GM12878 (cell line): ENCODE measurements at regions of chr1 and their contacts with region 1.

Region 1: DNA sequence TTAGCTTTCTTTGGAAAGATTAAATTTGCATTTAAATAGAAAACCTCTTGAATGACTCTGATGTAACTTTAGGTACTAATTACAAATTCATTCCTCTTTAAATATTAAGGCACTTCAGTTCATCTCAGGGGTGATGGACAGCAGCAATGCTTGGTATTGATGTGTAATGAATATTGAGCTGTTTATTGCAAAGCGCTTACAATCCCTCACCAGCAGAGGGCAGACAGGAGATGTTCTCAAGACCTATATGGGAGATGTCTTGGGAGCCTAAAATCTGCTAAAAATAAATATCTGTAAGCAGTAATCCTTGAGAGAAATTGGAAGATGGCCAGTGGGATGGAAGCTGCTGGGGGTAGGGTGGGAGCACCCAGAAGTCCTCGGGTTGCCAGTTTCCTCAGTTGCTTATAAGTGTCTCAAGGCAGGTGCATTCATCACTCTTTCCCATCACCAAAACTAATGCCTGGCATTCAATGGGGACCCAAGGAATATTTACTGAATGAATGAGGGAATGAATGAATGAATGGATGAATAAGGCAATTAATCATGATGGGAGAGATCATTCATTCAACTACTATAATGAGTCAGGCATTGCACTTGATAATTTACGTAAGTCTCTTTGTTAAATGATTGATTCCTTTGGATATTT is 2.3 kb downstream of the KLHDC8A start:
- DNase-seq: peak; percentile 9
- ATAC-seq: peak; percentile 91
- H3K4me3 ChIP-seq: no peak overlapping the region
- H3K27ac ChIP-seq: no peak overlapping the region
- H3K4me1 ChIP-seq: no peaks in the 10 kb centered on the region
- H3K27me3 ChIP-seq: peaks cover 0 to 4% of the 10 kb centered on the region in 2 experiments; a peak in 3 of 4 replicates
- CTCF ChIP-seq: peak; percentile 74 to 83 (median 83)
- EP300 ChIP-seq: no peak
- POLR2A ChIP-seq: no peak
- RAD21 ChIP-seq: peak; percentile 69

Region 2: DNA sequence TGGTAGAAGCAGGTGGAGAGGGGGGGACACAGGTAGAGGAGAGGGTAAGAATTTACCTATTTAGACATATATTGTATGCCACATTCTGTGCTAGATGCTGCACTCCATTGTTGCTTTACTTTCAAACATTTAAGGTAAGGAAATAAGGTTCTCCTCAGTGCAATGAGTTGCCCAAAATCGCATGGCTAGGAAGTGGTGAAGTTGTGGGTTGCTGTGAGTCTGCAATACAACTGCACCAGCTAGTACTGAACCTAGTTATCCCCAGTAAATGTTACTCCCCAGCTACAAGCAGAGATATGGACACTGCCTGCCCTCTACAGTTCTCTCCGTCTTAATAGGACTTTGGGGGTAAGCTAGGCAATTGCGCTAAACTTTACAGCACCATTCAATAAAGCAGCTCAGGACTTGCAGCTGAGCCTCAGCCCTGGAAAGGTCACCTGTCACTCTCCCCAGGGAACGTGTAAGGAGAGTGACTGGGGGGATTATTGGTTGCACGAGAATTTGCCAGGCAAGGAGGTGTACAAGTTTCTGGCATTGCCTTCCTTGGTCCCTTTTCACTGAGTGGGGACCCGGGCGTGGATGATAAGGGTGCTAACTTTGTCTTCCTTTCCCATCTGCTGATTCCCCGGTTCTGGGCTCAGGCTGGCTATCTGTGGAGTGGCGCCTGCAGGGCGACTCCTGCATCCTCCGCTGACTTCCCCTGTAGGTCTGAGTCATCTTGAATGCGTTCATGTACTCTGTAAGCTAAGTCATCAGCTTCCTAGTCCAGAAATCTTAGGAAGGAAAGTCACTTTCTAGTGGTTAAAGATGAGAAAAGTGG is 382.7 kb before region 1 on chr1:
- CTCF ChIA-PET with region 1: no interaction called
- POLR2A ChIA-PET with region 1: no interaction called
- RAD21 ChIA-PET with region 1: no interaction called
- SMC1A ChIA-PET with region 1: no interaction called
- in situ Hi-C with region 1: no loop called
- intact Hi-C with region 1: no loop called
- DNase-seq: no peak
- ATAC-seq: no peak
- H3K4me3 ChIP-seq: no peak overlapping the region
- H3K27ac ChIP-seq: no peak overlapping the region
- H3K4me1 ChIP-seq: no peaks in the 10 kb centered on the region
- H3K27me3 ChIP-seq: peaks cover 1 to 5% of the 10 kb centered on the region in 2 experiments; a peak in 2 of 4 replicates
- CTCF ChIP-seq: no peak
- EP300 ChIP-seq: no peak
- POLR2A ChIP-seq: no peak
- RAD21 ChIP-seq: no peak

Region 3: GRCh38 chr1:205121660-205122488 is 232.5 kb before region 1 on chr1 and contains the start of gene RBBP5:
- CTCF ChIA-PET with region 1: no interaction called
- POLR2A ChIA-PET with region 1: no interaction called
- RAD21 ChIA-PET with region 1: no interaction called
- SMC1A ChIA-PET with region 1: no interaction called
- in situ Hi-C with region 1: no loop called
- intact Hi-C with region 1: no loop called
- DNase-seq: peak; percentile 94
- ATAC-seq: peak; percentile 97
- H3K4me3 ChIP-seq: peak within 1 kb of the TSS; percentile 96
- H3K27ac ChIP-seq: peak within 1 kb of the TSS; percentile 99
- H3K4me1 ChIP-seq: no peaks in the 10 kb centered on the region; the same call in 1 of the 2 replicates
- H3K27me3 ChIP-seq: no peaks in the 10 kb centered on the region
- CTCF ChIP-seq: peak; percentile 76 to 84 (median 82)
- EP300 ChIP-seq: peak in 1 of 2 experiments; percentile 22; a peak in 2 of 4 replicates
- POLR2A ChIP-seq: peak; percentile 99
- RAD21 ChIP-seq: peak; percentile 55
- polyA plus RNA-seq, gene RBBP5: 10.0 to 11.5 TPM

Region 4: GRCh38 chr1:205301842-205302588 is 52.4 kb before region 1 on chr1:
- CTCF ChIA-PET with region 1: no interaction called
- POLR2A ChIA-PET with region 1: no interaction called
- RAD21 ChIA-PET with region 1: no interaction called
- SMC1A ChIA-PET with region 1: no interaction called
- in situ Hi-C with region 1: no loop called
- intact Hi-C with region 1: no loop called
- DNase-seq: no peak
- ATAC-seq: no peak
- H3K4me3 ChIP-seq: no peak overlapping the region
- H3K27ac ChIP-seq: no peak overlapping the region
- H3K4me1 ChIP-seq: no peaks in the 10 kb centered on the region
- H3K27me3 ChIP-seq: peaks cover 0 to 2% of the 10 kb centered on the region in 2 experiments; a peak in 1 of 4 replicates
- CTCF ChIP-seq: no peak
- EP300 ChIP-seq: no peak
- POLR2A ChIP-seq: no peak
- RAD21 ChIP-seq: no peak

Region 5: DNA sequence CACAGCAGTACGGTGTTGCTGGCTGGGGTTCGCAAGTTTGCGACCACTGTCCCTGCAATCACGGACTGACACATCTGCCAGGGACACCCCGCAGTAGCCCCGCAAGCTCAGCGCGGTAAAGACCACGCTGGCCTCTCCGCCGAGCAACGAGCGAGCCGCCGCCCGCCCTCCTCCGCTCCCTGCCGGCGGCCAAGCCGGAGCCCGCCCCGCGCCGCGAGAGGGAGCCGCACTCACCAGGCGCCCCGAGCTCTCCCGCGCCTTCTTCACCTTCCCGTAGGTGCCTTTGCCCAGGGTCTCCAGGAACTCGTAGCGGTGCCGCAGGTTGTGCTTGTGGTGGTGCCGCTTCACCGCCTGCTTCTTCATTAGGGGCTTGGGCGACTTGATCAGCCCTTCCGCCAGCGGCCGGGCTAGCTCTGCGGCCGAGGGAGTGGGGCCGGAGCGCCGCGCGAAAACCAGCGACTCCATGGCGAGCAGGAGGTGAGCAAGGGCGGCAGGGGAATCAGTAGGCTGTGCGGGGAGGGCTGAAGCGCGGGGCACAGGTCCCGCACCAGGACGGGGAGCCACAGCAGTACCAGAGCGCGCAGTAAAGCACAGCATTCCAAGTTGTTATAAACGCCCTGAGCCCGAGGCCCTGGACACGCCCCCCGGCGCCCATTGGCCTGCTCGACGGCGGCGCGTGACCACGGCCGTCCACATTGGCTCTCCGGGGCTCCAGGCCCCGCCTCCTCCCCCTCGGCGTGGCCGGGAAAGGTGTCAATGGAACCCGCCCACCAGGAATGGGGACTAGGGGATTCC is 33.0 kb before region 1 on chr1 and contains the start of gene NUAK2:
- CTCF ChIA-PET with region 1: interaction called, 28 read pairs
- POLR2A ChIA-PET with region 1: no interaction called
- RAD21 ChIA-PET with region 1: interaction called, 12 read pairs
- SMC1A ChIA-PET with region 1: interaction called, 19 read pairs
- in situ Hi-C with region 1: no loop called
- intact Hi-C with region 1: no loop called
- DNase-seq: no peak
- ATAC-seq: peak; percentile 85
- H3K4me3 ChIP-seq: peak within 1 kb of the TSS; percentile 36; the same call in 1 of the 2 replicates
- H3K27ac ChIP-seq: no peak within 1 kb of the TSS
- H3K4me1 ChIP-seq: peaks cover 13% of the 10 kb centered on the region
- H3K27me3 ChIP-seq: peaks cover 0 to 8% of the 10 kb centered on the region in 2 experiments; a peak in 3 of 4 replicates
- CTCF ChIP-seq: peak in 1 of 3 experiments; percentile 21; a peak in 1 of 6 replicates
- EP300 ChIP-seq: no peak
- POLR2A ChIP-seq: peak; percentile 44; the same call in 1 of the 2 replicates
- RAD21 ChIP-seq: peak; percentile 9; the same call in 1 of the 2 replicates
- polyA plus RNA-seq, gene NUAK2: 0.27 to 0.31 TPM

Region 6: GRCh38 chr1:205365945-205366463 is 11.6 kb after region 1 on chr1:
- CTCF ChIA-PET with region 1: interaction called, 19 read pairs
- POLR2A ChIA-PET with region 1: no interaction called
- RAD21 ChIA-PET with region 1: interaction called, 3 read pairs
- SMC1A ChIA-PET with region 1: interaction called, 3 read pairs
- in situ Hi-C with region 1: no loop called
- intact Hi-C with region 1: no loop called
- DNase-seq: no peak
- ATAC-seq: no peak
- H3K4me3 ChIP-seq: no peak overlapping the region
- H3K27ac ChIP-seq: no peak overlapping the region
- H3K4me1 ChIP-seq: no peaks in the 10 kb centered on the region
- H3K27me3 ChIP-seq: peaks cover 0 to 3% of the 10 kb centered on the region in 2 experiments; a peak in 2 of 4 replicates
- CTCF ChIP-seq: no peak
- EP300 ChIP-seq: no peak
- POLR2A ChIP-seq: no peak
- RAD21 ChIP-seq: no peak

Region 7: DNA sequence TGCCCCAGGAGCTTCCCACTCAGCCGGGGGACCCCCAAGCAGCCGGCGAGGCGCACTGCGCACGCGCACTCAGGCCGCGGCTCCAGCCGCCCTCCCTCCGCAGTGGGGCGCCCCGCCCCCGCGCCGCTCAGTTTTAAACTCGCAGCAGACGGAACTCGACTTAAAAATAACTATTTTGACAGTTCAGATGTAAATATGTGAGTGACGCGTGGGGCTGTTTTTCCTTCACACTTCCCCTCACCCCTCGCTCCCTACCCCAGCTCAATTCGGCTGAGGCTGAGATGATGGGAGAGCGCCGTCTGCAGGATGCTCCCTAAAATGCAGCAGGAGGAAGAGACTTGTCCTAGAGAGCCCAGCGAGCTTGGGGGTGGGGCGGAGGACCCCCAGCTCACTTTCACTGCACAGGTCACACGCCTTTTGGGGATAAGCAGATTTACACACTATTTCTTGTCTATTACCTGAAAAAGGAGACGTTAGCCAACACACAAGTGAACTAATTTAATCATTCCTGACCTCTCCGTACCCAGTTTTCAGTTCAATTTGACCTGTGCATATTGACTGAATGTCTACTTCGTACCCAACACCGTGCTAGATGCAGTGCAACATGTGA is 76.4 kb after region 1 on chr1:
- CTCF ChIA-PET with region 1: interaction called, 22 read pairs
- POLR2A ChIA-PET with region 1: no interaction called
- RAD21 ChIA-PET with region 1: interaction called, 14 read pairs
- SMC1A ChIA-PET with region 1: interaction called, 5 read pairs
- in situ Hi-C with region 1: no loop called
- intact Hi-C with region 1: no loop called
- DNase-seq: peak; percentile 13
- ATAC-seq: peak; percentile 85
- H3K4me3 ChIP-seq: peak overlapping the region; percentile 54; the same call in 1 of the 2 replicates
- H3K27ac ChIP-seq: no peak overlapping the region
- H3K4me1 ChIP-seq: peaks cover 3% of the 10 kb centered on the region
- H3K27me3 ChIP-seq: peaks cover 3 to 4% of the 10 kb centered on the region in 2 experiments; a peak in 2 of 4 replicates
- CTCF ChIP-seq: peak; percentile 53 to 85 (median 72)
- EP300 ChIP-seq: peak in 1 of 2 experiments; percentile 38; a peak in 1 of 4 replicates
- POLR2A ChIP-seq: no peak
- RAD21 ChIP-seq: peak; percentile 45

Region 8: DNA sequence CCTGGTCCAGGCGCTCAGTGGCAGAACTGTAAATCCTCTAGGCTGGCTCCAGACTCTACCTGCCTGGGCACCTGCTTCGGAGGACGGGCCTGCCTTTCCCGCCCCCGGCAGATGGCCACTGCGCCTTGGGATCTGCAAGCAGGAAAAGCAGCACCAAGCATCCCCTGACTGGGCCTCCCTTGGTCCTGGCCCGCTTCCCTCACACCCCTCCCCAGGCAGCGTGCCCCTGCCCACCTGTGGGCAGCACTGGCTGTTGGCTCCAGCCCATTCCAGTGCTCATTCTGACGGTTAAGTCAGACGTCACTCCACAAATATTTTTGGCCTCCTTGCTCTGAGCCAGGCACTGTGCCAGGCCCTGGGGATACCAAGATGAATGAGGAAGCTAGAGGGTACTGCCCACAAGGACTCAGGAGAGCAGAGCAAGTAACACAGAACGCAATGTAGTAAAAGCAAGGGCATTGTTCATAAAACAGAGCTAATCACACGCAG is 123.4 kb after region 1 on chr1:
- CTCF ChIA-PET with region 1: interaction called, 167 read pairs
- POLR2A ChIA-PET with region 1: no interaction called
- RAD21 ChIA-PET with region 1: interaction called, 11 read pairs
- SMC1A ChIA-PET with region 1: interaction called, 107 read pairs
- in situ Hi-C with region 1: no loop called
- intact Hi-C with region 1: no loop called
- DNase-seq: no peak
- ATAC-seq: no peak
- H3K4me3 ChIP-seq: no peak overlapping the region
- H3K27ac ChIP-seq: no peak overlapping the region
- H3K4me1 ChIP-seq: peaks cover 25% of the 10 kb centered on the region
- H3K27me3 ChIP-seq: peaks cover 0 to 2% of the 10 kb centered on the region in 2 experiments; a peak in 1 of 4 replicates
- CTCF ChIP-seq: no peak
- EP300 ChIP-seq: no peak
- POLR2A ChIP-seq: no peak
- RAD21 ChIP-seq: no peak